AG04449 (cell line): ENCODE measurements at regions of chr15 and their contacts with region 1.

Region 1: DNA sequence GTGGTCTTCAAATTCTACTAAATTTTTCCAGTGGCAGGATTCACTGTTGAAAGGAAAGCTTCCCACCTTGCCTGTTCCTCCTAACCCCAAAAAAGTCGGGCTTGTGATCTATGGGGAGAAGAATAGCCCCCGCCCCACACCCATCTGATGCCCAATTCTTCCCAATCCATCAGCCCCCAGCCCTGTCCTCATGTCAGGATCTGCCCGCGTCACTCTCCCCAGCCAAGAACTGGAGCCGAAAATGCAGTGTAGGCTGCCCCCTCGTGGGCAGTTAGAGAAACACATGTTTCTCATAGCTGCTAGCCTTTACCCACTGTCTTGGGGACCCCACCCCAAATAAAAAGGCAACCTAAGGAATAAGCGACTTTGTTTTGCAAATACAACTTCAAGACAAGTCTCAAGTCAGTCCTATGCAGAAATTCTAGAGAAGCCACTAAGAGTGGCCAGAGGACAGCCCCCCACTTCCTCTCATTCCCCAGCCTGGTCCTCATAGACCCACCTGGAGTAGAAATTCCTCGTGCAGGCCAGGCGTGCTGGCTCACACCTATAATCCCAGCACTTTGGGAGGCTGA is 13.0 kb upstream of the CSK start:
- DNase-seq: no peak
- H3K4me3 ChIP-seq: peak overlapping the region; percentile 25
- CTCF ChIP-seq: peak; percentile 75

Region 2: GRCh38 chr15:74307827-74308644 is 460.8 kb before region 1 on chr15:
- CTCF ChIA-PET with region 1: no interaction called
- POLR2A ChIA-PET with region 1: no interaction called
- DNase-seq: no peak
- H3K4me3 ChIP-seq: no peak overlapping the region
- CTCF ChIP-seq: peak; percentile 88

Region 3: DNA sequence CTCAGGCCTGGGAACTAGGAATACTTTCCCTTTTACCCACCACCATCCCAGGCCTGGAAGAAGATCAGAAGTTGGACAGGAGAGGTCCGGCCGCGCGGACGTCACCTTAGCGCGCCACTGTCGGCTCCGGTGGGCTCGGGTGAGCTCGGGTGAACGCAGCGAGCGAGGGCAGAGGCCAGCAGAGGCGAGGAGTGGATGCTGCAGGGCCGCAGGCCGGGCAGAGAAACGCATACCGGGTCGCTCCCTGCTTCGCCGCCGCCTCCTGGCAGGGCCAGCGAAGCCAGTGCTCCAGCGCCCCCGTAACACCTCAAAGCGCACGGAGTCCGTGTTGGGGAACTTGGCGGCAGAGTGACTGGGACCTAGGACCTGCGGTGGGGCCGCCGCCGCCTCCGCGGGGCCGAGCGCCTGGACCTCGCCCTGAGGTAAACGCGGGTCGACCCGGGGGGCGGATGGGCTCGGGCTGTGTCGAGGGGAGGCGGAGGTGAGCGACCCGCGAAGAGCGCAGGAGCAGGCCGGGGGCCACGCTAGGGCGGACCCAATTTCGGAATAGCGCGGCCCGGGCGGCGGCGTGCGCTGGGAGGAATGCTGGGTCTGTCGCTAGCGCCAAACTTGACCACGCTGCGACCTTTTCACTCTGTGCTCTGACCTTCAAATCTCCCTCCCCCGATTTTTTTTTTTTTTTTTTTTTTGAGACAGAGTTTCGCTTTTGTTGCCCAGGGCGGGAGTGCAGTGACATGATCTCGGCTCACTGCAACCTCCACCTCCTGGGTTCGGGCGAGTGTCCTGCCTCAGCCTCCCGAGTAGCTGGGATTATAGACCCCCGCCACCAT is 403.0 kb before region 1 on chr15:
- CTCF ChIA-PET with region 1: interaction called, 115 read pairs
- POLR2A ChIA-PET with region 1: no interaction called
- DNase-seq: no peak
- H3K4me3 ChIP-seq: peak overlapping the region; percentile 59
- CTCF ChIP-seq: no peak

Region 4: DNA sequence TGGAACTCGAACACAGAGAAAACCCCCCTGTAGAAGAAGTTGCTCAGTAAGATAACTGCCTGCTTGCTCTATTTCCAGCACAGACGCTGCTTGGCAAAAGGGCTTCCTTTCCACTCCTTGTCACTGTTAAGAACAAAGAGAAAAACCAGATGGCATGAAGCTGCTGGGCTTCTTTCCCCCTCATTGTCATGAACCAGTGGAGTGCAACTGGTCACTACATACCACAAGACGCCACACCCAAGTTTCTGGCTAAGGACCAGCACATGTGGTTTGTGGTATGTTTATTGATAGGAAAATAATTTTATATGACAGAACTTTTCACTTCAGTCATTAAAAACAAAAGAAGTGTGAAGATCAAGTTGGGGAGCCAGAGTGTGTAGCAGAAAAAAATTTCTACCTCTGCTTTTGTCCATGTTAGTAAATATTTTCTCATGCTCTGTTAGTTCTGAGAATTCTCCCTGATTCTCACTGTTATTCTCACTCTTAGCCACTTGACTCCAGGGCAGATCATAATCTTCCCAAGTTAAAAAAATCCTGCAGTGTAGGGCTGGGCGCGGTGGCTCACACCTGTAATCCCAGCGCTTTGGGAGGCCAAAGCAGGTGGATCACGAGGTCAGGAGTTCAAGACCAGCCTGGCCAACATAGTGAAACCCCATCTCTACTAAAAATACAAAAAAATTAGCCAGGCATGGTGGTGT is 115.3 kb before region 1 on chr15:
- CTCF ChIA-PET with region 1: interaction called, 1,672 read pairs
- POLR2A ChIA-PET with region 1: no interaction called
- DNase-seq: no peak
- H3K4me3 ChIP-seq: no peak overlapping the region
- CTCF ChIP-seq: no peak

Region 5: DNA sequence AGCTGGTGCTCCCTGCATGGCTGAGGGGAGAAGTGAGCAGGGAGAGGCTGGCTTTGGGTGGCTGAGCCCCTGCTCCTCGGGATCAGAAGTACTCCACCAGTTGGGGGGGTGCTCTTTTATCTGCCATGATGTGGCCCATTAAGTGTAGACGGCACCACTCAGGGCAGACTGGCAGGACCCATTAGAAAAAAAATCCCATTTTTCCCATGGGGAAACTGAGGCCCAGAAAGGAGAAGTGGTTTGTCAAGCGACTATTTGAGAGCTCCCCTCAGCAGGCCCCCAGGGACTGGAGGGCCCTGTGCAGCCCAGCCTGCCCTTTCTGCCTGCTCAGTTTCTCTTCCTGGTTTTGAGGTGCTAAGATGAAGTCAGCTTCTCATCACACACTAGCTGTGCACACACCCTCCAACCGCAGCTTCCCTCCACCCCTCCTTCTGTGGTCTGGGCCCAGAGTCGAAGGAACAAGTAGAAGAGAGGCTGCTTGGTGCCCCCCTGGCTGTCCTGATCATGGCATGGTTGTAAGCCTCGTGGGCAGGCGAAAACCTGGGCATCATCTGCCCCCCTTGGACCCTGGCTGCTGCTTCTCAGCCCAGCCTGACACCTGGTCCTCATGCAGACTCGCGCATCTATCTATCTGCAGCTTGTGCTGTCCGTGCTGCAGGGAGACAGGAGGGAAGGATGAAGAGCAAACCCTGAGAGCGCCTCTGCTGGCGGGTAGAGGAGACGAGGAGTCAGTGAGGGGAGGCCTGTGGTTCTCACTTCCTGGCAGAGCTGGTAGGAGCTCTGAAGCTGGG is 18.6 kb after region 1 on chr15:
- CTCF ChIA-PET with region 1: interaction called, 333 read pairs
- POLR2A ChIA-PET with region 1: no interaction called
- DNase-seq: no peak
- H3K4me3 ChIP-seq: no peak overlapping the region
- CTCF ChIP-seq: peak; percentile 81

Region 6: GRCh38 chr15:74835307-74835823 is 66.5 kb after region 1 on chr15:
- CTCF ChIA-PET with region 1: interaction called, 53 read pairs
- POLR2A ChIA-PET with region 1: no interaction called
- DNase-seq: no peak
- H3K4me3 ChIP-seq: no peak overlapping the region
- CTCF ChIP-seq: peak; percentile 83

Region 7: GRCh38 chr15:74906446-74907162 is 137.7 kb after region 1 on chr15 and contains the start of gene FAM219B:
- CTCF ChIA-PET with region 1: interaction called, 68 read pairs
- POLR2A ChIA-PET with region 1: no interaction called
- DNase-seq: no peak
- H3K4me3 ChIP-seq: peak within 1 kb of the TSS; percentile 73
- CTCF ChIP-seq: no peak